Endothelial cell of umbilical vein (primary cell): ENCODE measurements at regions of chr11 and their contacts with region 1.

Region 1: GRCh38 chr11:848380-848931 is 5.8 kb downstream of the TSPAN4 start:
- DNase-seq: peak; percentile 32
- H3K4me3 ChIP-seq: no peak overlapping the region
- H3K27ac ChIP-seq: no peak overlapping the region
- H3K4me1 ChIP-seq: peaks cover 26% of the 10 kb centered on the region
- H3K27me3 ChIP-seq: no peaks in the 10 kb centered on the region
- CTCF ChIP-seq: peak; percentile 81 to 94
- POLR2A ChIP-seq: no peak

Region 2: DNA sequence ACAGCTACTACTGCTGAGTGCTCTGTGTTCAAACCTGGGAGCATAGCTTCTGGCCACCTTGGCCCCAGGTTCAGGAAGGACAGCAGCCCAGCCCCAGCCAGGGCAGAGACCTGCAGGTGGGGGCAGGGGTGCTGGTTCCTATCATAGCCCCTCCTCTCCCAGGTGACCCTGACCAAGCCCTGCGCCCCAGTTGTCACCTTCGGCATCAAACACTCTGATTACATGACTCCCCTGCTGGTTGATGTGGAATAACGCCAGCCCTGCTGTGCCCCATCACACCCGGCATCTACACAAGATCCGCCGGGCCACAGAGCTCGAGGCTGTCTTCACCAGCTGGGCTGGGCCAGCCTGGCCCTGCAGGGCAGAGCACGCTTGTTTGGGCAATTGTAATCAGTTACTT is 648.7 kb before region 1 on chr11:
- CTCF ChIA-PET with region 1: no interaction called
- POLR2A ChIA-PET with region 1: no interaction called
- dilution Hi-C with region 1: no loop called
- intact Hi-C with region 1: no loop called
- DNase-seq: no peak
- H3K4me3 ChIP-seq: no peak overlapping the region
- H3K27ac ChIP-seq: no peak overlapping the region
- H3K4me1 ChIP-seq: no peaks in the 10 kb centered on the region
- H3K27me3 ChIP-seq: no peaks in the 10 kb centered on the region
- CTCF ChIP-seq: no peak
- POLR2A ChIP-seq: no peak

Region 3: GRCh38 chr11:898143-898511 is 49.7 kb after region 1 on chr11:
- CTCF ChIA-PET with region 1: interaction called, 5 read pairs
- POLR2A ChIA-PET with region 1: interaction called, 3 read pairs
- dilution Hi-C with region 1: no loop called
- intact Hi-C with region 1: loop called (anchors 1 kb)
- DNase-seq: peak; percentile 13
- H3K4me3 ChIP-seq: no peak overlapping the region
- H3K27ac ChIP-seq: no peak overlapping the region
- H3K4me1 ChIP-seq: no peaks in the 10 kb centered on the region
- H3K27me3 ChIP-seq: no peaks in the 10 kb centered on the region
- CTCF ChIP-seq: peak in 1 of 2 donors; percentile 57
- POLR2A ChIP-seq: no peak

Region 4: DNA sequence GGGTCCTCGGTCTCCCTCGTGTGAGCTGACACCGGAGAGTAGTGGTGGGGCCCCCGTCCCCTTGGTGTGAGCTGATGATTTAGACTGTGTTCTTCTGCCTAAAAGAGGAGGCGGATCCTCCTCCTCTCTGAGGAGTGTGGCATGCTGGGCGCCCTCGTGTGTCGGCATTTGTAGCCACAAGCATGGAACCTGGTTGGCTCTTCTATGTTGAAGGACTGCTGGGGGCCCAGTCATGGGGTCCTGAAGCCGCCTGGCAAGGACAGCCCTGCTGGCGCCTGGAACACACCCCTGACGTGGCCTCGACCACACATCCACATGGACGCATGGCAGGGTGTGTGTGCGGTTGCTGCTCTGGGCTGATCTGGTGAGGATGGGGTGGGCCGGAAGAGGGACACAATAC is 127.4 kb after region 1 on chr11:
- CTCF ChIA-PET with region 1: interaction called, 3 read pairs
- POLR2A ChIA-PET with region 1: no interaction called
- dilution Hi-C with region 1: no loop called
- intact Hi-C with region 1: loop called (anchors 5 kb)
- DNase-seq: peak; percentile 44
- H3K4me3 ChIP-seq: no peak overlapping the region
- H3K27ac ChIP-seq: no peak overlapping the region
- H3K4me1 ChIP-seq: no peaks in the 10 kb centered on the region
- H3K27me3 ChIP-seq: no peaks in the 10 kb centered on the region
- CTCF ChIP-seq: peak in 1 of 2 donors; percentile 42
- POLR2A ChIP-seq: no peak